Prostate gland (tissue), 2 donors: ENCODE measurements at regions of chr15 and their contacts with region 1.

Region 1: GRCh38 chr15:39171944-39172368 is 408.9 kb upstream of the THBS1 start:
- DNase-seq: peak; percentile 73
- H3K4me3 ChIP-seq: no peak overlapping the region
- H3K27ac ChIP-seq: peak overlapping the region; percentile 22 to 46
- H3K4me1 ChIP-seq: peaks cover 9% of the 10 kb centered on the region
- H3K27me3 ChIP-seq: no peaks in the 10 kb centered on the region
- CTCF ChIP-seq: peak in 2 of 4 experiments; percentile 72 to 75
- POLR2A ChIP-seq: no peak

Region 2: DNA sequence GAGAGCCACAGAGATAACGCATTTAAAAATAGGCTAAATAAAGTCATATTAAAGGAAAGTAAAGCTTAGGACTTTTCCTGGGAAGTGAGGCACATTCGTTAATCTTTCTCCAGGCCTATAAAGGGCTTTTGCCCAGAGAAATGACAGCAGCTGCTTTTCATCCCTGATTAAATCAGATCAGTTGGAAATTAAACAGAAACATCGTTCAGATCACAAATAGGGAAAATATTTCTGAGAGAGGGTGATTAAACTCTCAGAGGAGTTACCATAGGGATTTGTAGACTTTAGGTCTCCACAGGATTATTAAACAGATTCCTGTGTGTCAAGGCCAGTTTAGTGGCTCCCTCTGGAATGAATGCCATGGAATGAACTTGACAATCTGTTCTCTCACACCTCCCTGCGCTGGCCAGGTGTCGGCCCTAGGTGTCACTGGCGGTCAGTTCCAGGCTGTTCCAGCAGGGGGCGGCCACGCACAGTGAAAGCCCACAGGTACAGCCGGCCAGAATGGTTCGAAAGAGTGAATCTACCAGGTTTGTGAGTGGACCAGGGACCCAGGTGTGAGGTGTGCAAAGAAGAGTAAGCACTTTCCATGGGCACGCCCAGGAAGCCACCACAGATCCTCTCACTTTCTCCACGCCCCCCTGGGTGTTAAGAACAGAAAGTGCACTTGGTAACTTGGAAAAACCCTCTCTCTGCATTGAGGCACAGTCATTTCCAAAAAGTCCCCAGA is 354.4 kb before region 1 on chr15:
- intact Hi-C with region 1: loop called (anchors 10 kb)
- DNase-seq: peak; percentile 88
- H3K4me3 ChIP-seq: no peak overlapping the region
- H3K27ac ChIP-seq: no peak overlapping the region
- H3K4me1 ChIP-seq: no peaks in the 10 kb centered on the region
- H3K27me3 ChIP-seq: no peaks in the 10 kb centered on the region
- CTCF ChIP-seq: peak; percentile 97 to 99 (median 98)
- POLR2A ChIP-seq: no peak